Activated CD8-positive, alpha-beta T cell treated with anti-CD3 and anti-CD28 coated beads for 36 hours (primary cell): ENCODE measurements at regions of chr14 and their contacts with region 1.

Region 1: GRCh38 chr14:80987235-80988032 is 32.0 kb downstream of the TSHR start:
- DNase-seq: peak; percentile 76
- ATAC-seq: peak; percentile 45
- H3K4me3 Mint-ChIP-seq: no peak overlapping the region
- H3K27ac Mint-ChIP-seq: no peak overlapping the region
- H3K4me1 Mint-ChIP-seq: no peaks in the 10 kb centered on the region
- H3K27me3 Mint-ChIP-seq: peaks cover 9% of the 10 kb centered on the region
- CTCF ChIP-seq: peak; percentile 96

Region 2: DNA sequence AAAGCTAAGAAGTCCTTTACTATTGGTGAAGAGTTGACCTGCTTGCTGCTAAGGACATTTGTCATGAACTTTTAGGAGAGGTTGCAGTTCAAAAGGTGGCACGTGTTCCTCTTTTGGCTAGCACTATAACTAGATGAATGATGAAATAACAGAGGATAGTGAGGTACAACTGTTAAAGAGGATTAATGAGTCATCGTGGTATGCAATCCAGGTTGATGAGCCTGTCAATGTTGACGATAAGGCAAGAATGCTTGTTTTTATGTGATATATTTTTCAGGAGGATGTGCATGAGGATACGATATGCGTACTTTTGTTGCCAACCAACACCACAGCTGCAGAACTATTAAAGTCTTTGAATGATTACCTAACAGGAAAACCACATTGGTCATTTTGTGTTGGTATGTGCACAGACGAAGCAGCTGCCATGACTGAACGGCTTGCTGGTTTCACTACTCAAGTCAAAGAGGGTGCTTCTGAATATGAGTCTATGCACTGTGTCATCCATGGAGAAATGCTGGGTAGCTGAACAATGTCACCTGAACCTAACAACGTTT is 56.5 kb before region 1 on chr14:
- CTCF ChIA-PET with region 1: interaction called, 13 read pairs
- POLR2A ChIA-PET with region 1: interaction called, 3 read pairs
- intact Hi-C with region 1: no loop called
- DNase-seq: peak; percentile 81
- ATAC-seq: peak; percentile 97
- H3K4me3 Mint-ChIP-seq: peak overlapping the region; percentile 52
- H3K27ac Mint-ChIP-seq: peak overlapping the region; percentile 79
- H3K4me1 Mint-ChIP-seq: peaks cover 30% of the 10 kb centered on the region
- H3K27me3 Mint-ChIP-seq: no peaks in the 10 kb centered on the region
- CTCF ChIP-seq: no peak

Region 3: GRCh38 chr14:80941241-80942182 is 45.9 kb before region 1 on chr14 and contains the start of gene CEP128:
- CTCF ChIA-PET with region 1: interaction called, 31 read pairs
- POLR2A ChIA-PET with region 1: no interaction called
- intact Hi-C with region 1: no loop called
- DNase-seq: peak; percentile 94
- ATAC-seq: peak; percentile 89
- H3K4me3 Mint-ChIP-seq: peak within 1 kb of the TSS; percentile 90
- H3K27ac Mint-ChIP-seq: peak within 1 kb of the TSS; percentile 98
- H3K4me1 Mint-ChIP-seq: peaks cover 30% of the 10 kb centered on the region
- H3K27me3 Mint-ChIP-seq: no peaks in the 10 kb centered on the region
- CTCF ChIP-seq: no peak
- total RNA-seq, gene CEP128: 21.6 to 22.5 TPM

Region 4: GRCh38 chr14:80973931-80974641 is 13.3 kb before region 1 on chr14:
- CTCF ChIA-PET with region 1: interaction called, 107 read pairs
- POLR2A ChIA-PET with region 1: interaction called, 4 read pairs
- intact Hi-C with region 1: no loop called
- DNase-seq: no peak
- ATAC-seq: peak; percentile 53
- H3K4me3 Mint-ChIP-seq: no peak overlapping the region
- H3K27ac Mint-ChIP-seq: no peak overlapping the region
- H3K4me1 Mint-ChIP-seq: peaks cover 14% of the 10 kb centered on the region
- H3K27me3 Mint-ChIP-seq: peaks cover 2% of the 10 kb centered on the region
- CTCF ChIP-seq: no peak

Region 5: DNA sequence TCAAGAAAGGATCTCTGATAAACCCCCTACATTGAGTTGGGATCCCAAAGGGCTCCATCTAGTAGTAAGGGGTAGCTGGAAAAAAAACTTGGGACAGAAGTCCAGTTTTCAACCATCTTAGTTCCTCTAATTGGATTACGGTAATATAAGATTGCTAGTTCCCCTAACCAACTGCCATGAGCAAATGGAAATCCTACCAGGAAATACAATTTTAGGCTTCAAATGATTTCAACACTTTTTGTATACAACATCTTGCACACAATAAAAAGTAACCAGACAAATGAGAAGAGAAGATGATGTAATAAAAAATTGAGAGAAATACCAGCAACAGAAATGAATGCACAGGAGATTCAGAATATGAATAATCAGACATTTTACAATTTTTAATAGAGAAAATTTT is 41.0 kb after region 1 on chr14:
- CTCF ChIA-PET with region 1: no interaction called
- POLR2A ChIA-PET with region 1: no interaction called
- intact Hi-C with region 1: no loop called
- DNase-seq: no peak
- ATAC-seq: no peak
- H3K4me3 Mint-ChIP-seq: no peak overlapping the region
- H3K27ac Mint-ChIP-seq: no peak overlapping the region
- H3K4me1 Mint-ChIP-seq: peaks cover 4% of the 10 kb centered on the region
- H3K27me3 Mint-ChIP-seq: no peaks in the 10 kb centered on the region
- CTCF ChIP-seq: no peak

Region 6: DNA sequence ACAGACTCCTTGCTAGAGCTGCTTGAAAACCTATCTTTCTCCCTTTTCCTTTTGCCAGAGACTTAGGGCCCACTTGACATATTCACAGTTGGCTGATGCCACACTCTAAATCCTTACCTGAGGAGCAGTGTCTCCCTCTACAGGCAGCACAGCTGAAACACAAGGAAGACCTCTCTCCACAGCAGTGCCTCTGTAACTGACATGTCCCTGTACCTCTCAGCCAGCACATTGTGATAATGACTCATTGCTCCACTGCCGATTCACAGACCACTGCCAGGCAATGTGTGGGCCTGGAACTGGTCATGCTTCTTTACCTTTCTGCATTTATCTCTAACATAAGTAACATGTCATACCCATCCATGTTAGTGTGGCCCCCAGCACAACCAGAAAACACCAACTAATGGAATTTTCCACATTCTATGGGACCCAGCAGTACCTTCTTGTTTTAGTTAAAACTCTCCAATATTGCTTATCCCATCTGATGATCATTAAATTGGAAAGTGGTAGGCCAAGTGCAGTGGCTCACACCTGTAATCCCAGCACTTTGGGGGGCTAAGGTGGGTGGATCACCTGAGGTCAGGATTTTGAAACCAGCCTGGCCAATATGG is 176.8 kb after region 1 on chr14:
- CTCF ChIA-PET with region 1: interaction called, 20 read pairs
- POLR2A ChIA-PET with region 1: no interaction called
- intact Hi-C with region 1: no loop called
- DNase-seq: peak; percentile 83
- ATAC-seq: peak; percentile 100
- H3K4me3 Mint-ChIP-seq: no peak overlapping the region
- H3K27ac Mint-ChIP-seq: no peak overlapping the region
- H3K4me1 Mint-ChIP-seq: peaks cover 14% of the 10 kb centered on the region
- H3K27me3 Mint-ChIP-seq: no peaks in the 10 kb centered on the region
- CTCF ChIP-seq: peak; percentile 74

Region 7: GRCh38 chr14:81170104-81170828 is 182.8 kb after region 1 on chr14:
- CTCF ChIA-PET with region 1: interaction called, 20 read pairs
- POLR2A ChIA-PET with region 1: no interaction called
- intact Hi-C with region 1: no loop called
- DNase-seq: peak; percentile 93
- ATAC-seq: peak; percentile 97
- H3K4me3 Mint-ChIP-seq: peak overlapping the region; percentile 90
- H3K27ac Mint-ChIP-seq: peak overlapping the region; percentile 95
- H3K4me1 Mint-ChIP-seq: peaks cover 15% of the 10 kb centered on the region
- H3K27me3 Mint-ChIP-seq: no peaks in the 10 kb centered on the region
- CTCF ChIP-seq: peak; percentile 86